IMR-90 (cell line): ENCODE measurements at regions of chr4 and their contacts with region 1.

Region 1: DNA sequence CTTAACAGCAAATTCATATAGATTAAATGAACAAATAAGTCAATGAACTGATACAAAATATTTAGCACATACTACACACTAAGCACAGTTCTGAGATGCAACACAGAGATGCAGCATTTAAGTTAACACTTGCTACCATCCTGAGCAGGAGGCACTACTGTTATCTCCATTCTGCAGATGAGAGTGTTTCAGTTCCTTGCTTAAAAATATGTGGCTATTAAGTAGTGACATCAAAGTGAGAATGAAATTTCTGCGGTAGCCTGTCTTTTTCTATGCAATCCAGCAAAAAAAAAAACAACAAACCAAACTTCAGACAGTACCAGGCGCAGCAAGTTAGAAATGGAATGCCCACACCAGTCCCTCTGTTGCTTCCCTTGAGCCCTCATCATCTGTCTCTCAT is 90.8 kb downstream of the SHISA3 start:
- DNase-seq: no peak
- ATAC-seq: no peak
- H3K4me3 ChIP-seq: no peak overlapping the region
- H3K27ac ChIP-seq: no peak overlapping the region
- H3K4me1 ChIP-seq: peaks cover 4% of the 10 kb centered on the region; the same call in 1 of the 2 replicates
- H3K27me3 ChIP-seq: peaks cover 4% of the 10 kb centered on the region
- CTCF ChIP-seq: no peak
- POLR2A ChIP-seq: no peak
- RAD21 ChIP-seq: no peak

Region 2: GRCh38 chr4:42412251-42412650 is 75.9 kb before region 1 on chr4:
- CTCF ChIA-PET with region 1: no interaction called
- POLR2A ChIA-PET with region 1: no interaction called
- dilution Hi-C with region 1: no loop called
- in situ Hi-C with region 1: no loop called
- intact Hi-C with region 1: loop called (anchors 10 kb)
- DNase-seq: peak; percentile 90
- ATAC-seq: peak; percentile 83
- H3K4me3 ChIP-seq: no peak overlapping the region
- H3K27ac ChIP-seq: peak overlapping the region; percentile 27; the same call in 1 of the 2 replicates
- H3K4me1 ChIP-seq: peaks cover 8% of the 10 kb centered on the region
- H3K27me3 ChIP-seq: no peaks in the 10 kb centered on the region
- CTCF ChIP-seq: no peak
- POLR2A ChIP-seq: no peak
- RAD21 ChIP-seq: no peak

Region 3: DNA sequence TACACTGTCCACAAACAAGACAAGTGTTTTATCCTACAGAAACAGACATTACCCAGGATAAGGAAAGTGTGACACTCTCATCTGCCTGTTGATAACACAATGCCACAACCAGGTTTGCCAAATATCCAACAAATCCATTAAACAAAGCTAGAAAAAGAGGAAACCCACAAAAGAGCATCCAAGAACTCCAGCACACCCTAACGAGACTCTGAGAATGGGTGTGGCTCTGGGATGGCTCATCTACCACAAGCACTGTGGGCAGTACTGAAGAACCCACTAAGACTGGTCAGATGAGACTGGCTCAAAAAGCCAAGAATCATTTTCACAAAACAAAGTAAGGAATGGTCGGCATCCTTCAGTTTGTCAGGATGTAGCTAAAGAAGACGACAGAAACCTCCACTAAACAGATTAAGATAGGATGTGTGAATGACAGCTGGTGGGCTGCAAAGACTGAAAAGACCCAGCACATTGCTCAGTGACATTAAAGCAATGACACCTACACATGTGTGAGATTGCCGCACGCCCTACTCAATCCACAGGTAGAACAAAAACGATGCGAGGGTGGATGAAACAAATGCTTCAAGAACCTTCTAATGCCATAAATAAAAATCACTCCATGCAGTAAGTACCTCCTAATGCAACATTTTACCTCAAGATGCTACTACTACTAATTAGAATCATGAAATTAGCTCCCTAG is 154.1 kb after region 1 on chr4:
- CTCF ChIA-PET with region 1: interaction called, 10 read pairs
- POLR2A ChIA-PET with region 1: no interaction called
- dilution Hi-C with region 1: no loop called
- in situ Hi-C with region 1: no loop called
- intact Hi-C with region 1: no loop called
- DNase-seq: no peak
- ATAC-seq: no peak
- H3K4me3 ChIP-seq: no peak overlapping the region
- H3K27ac ChIP-seq: no peak overlapping the region
- H3K4me1 ChIP-seq: no peaks in the 10 kb centered on the region
- H3K27me3 ChIP-seq: no peaks in the 10 kb centered on the region
- CTCF ChIP-seq: no peak
- POLR2A ChIP-seq: no peak
- RAD21 ChIP-seq: no peak